Naive thymus-derived CD4-positive, alpha-beta T cell (primary cell): ENCODE measurements at regions of chr10 and their contacts with region 1.

Region 1: DNA sequence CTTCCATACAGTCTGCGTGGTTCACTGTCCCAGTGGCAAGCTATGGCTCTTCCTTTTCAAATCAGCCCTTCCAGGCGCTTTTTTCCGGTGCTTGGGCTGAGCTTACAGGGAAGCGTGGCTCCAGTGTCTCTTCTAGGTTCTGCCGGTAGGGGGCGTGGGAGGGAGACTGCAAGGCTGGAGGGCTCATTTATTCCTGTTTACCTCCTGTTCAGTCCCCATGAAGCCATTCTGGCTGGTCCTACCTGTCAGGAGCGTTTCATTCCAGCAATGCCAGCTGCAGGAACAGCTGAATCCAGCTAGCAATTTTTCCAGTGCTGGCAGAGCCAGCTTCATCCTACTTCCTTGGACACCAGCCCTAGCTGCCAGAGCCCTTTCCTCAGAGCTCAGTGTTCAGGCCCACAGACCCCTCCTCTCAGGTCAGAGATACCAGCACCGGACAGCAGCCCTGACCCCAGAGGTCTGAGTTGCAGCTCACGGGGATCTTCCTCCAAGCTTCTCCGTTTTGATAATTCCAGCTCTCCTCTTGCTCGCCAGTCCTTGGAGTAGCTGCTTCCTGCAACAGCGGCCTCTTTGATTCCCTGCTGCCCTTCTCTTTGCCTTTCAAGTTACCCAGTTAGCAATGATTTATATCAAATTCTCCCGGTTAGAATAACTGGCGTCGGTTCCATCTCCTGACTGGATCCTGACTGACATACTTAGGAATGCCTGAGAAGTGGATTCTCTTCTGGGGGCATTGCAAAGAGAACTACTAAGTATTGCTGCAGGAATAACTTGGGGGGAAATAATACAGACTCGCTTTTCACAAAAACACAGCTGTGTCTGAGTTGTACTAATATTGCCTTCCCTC is 129.8 kb downstream of the FRMD4A start:
- DNase-seq: no peak
- ATAC-seq: no peak
- H3K4me3 ChIP-seq: no peak overlapping the region
- H3K4me3 Mint-ChIP-seq: no peak overlapping the region
- H3K27ac ChIP-seq: no peak overlapping the region
- H3K27ac Mint-ChIP-seq: peak overlapping the region in 1 of 9 donors; percentile 74
- H3K4me1 ChIP-seq: no peaks in the 10 kb centered on the region
- H3K4me1 Mint-ChIP-seq: peaks cover 0 to 1% (median 0%) of the 10 kb centered on the region in 7 donors
- H3K27me3 ChIP-seq: no peaks in the 10 kb centered on the region
- H3K27me3 Mint-ChIP-seq: peaks cover 17 to 22% (median 18%) of the 10 kb centered on the region in 5 donors

Region 2: DNA sequence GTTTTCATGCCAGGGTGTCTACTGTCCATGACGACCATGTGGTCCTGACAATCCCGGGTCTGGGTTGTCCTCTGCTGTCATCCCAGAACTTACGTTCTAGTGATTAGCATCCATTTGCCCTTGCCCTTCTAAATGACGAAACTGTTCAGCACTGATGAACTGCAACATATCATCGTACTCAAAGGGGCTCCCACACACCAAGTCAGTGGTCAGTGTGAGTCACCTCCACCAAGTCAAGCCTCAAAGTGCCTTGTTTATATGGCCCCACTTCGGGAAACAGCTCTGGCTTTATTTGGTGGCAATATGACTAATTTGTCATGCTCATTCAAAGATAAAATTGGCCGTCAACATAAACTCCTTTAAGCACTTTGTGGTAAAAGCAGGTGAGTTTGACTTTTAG is 19.1 kb after region 1 on chr10:
- CTCF ChIA-PET with region 1: no interaction called
- POLR2A ChIA-PET with region 1: no interaction called
- intact Hi-C with region 1: no loop called
- DNase-seq: no peak
- ATAC-seq: no peak
- H3K4me3 ChIP-seq: no peak overlapping the region
- H3K4me3 Mint-ChIP-seq: no peak overlapping the region
- H3K27ac ChIP-seq: no peak overlapping the region
- H3K27ac Mint-ChIP-seq: no peak overlapping the region
- H3K4me1 ChIP-seq: no peaks in the 10 kb centered on the region
- H3K4me1 Mint-ChIP-seq: peaks cover 0 to 1% (median 0%) of the 10 kb centered on the region in 7 donors
- H3K27me3 ChIP-seq: no peaks in the 10 kb centered on the region
- H3K27me3 Mint-ChIP-seq: peaks cover 0 to 11% (median 5%) of the 10 kb centered on the region in 5 donors

Region 3: DNA sequence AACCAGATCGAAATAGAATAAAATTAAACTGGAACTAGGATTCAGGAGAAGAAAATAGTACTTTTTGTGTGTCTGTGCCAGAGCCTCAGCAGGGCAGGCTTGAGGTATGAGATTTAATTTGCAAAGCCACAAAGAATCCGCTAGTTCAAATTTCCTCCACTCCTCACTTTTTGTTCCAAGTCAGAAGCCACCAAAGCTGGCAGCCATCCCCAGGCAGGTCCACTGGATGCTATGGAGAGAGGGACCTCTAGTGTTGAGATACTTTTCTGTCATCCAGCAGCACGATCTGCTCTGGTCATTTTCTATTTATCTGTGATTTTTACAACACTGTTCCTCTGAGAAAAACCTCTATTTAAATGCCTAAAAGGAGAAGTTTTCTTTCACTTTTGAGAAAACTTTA is 277.7 kb after region 1 on chr10:
- CTCF ChIA-PET with region 1: no interaction called
- POLR2A ChIA-PET with region 1: no interaction called
- intact Hi-C with region 1: loop called in 1 of 2 experiments (anchors 1 kb)
- DNase-seq: no peak
- ATAC-seq: no peak
- H3K4me3 ChIP-seq: no peak overlapping the region
- H3K4me3 Mint-ChIP-seq: no peak overlapping the region
- H3K27ac ChIP-seq: no peak overlapping the region
- H3K27ac Mint-ChIP-seq: no peak overlapping the region
- H3K4me1 ChIP-seq: no peaks in the 10 kb centered on the region
- H3K4me1 Mint-ChIP-seq: no peaks in the 10 kb centered on the region
- H3K27me3 ChIP-seq: no peaks in the 10 kb centered on the region
- H3K27me3 Mint-ChIP-seq: peaks cover 6 to 46% (median 16%) of the 10 kb centered on the region in 5 donors